PC-3 (cell line): ENCODE measurements at regions of chr2 and their contacts with region 1.

Region 1: DNA sequence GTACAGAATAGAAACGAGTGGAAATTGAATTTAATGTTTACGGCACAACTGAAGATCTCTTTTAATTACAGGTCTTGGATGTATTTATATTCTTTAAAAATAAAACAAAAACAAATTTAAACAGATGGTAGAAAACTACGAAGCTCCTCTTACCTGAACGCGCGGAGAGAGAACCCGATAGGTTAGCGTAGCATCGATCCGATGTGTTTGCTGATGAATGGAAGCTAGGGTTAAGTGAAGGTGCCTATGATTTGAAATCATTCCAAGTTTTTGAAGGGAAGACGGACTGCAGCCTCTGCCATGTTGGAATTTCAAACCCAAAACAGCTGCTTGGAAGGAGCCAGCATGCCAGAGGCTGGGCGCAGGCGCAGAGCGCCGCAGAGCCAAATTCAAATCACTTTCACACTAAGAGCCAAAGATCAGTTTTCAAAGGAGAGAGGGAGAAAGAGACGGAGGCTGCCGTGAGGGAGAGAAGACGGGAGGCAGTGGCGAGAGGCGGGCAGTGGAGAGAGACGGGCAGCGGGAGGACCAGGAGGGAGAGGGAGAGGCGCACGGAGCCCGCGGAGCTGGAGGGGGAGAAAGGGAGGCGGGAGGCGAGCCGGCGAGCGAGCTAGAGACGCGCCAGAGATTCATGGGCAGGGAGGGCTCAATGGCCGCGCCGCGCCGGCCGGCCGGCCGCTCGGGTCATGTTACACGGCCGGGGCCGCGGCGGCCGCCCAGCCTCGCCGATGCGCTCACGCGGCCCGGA is at the start of gene FIGN:
- DNase-seq: peak; percentile 76
- ATAC-seq: peak; percentile 78
- H3K4me3 ChIP-seq: peak within 1 kb of the TSS; percentile 87
- H3K27ac ChIP-seq: peak within 1 kb of the TSS; percentile 55
- H3K4me1 ChIP-seq: peaks cover 17% of the 10 kb centered on the region
- H3K27me3 ChIP-seq: no peaks in the 10 kb centered on the region
- CTCF ChIP-seq: no peak
- total RNA-seq, gene FIGN: 1.3 and 1.5 TPM in 2 replicates

Region 2: GRCh38 chr2:163302141-163302540 is 433.7 kb before region 1 on chr2:
- CTCF ChIA-PET with region 1: no interaction called
- POLR2A ChIA-PET with region 1: no interaction called
- intact Hi-C with region 1: no loop called
- DNase-seq: no peak
- ATAC-seq: no peak
- H3K4me3 ChIP-seq: no peak overlapping the region
- H3K27ac ChIP-seq: no peak overlapping the region
- H3K4me1 ChIP-seq: no peaks in the 10 kb centered on the region
- H3K27me3 ChIP-seq: peaks cover 4% of the 10 kb centered on the region; the same call in 1 of the 2 replicates
- CTCF ChIP-seq: no peak

Region 3: GRCh38 chr2:163345908-163346573 is 389.8 kb before region 1 on chr2:
- CTCF ChIA-PET with region 1: no interaction called
- POLR2A ChIA-PET with region 1: no interaction called
- intact Hi-C with region 1: loop called (anchors 5 kb)
- DNase-seq: peak; percentile 85
- ATAC-seq: 0 out of 2 replicates have a peak, but pooled peaks have one; percentile 8
- H3K4me3 ChIP-seq: no peak overlapping the region
- H3K27ac ChIP-seq: no peak overlapping the region
- H3K4me1 ChIP-seq: peaks cover 25% of the 10 kb centered on the region
- H3K27me3 ChIP-seq: no peaks in the 10 kb centered on the region
- CTCF ChIP-seq: peak; percentile 82

Region 4: GRCh38 chr2:163601377-163601776 is 134.5 kb before region 1 on chr2:
- CTCF ChIA-PET with region 1: no interaction called
- POLR2A ChIA-PET with region 1: no interaction called
- intact Hi-C with region 1: loop called (anchors 5 kb)
- DNase-seq: no peak
- ATAC-seq: no peak
- H3K4me3 ChIP-seq: no peak overlapping the region
- H3K27ac ChIP-seq: no peak overlapping the region
- H3K4me1 ChIP-seq: peaks cover 15% of the 10 kb centered on the region
- H3K27me3 ChIP-seq: no peaks in the 10 kb centered on the region
- CTCF ChIP-seq: no peak

Region 5: GRCh38 chr2:163878531-163879117 is 142.8 kb after region 1 on chr2:
- CTCF ChIA-PET with region 1: no interaction called
- POLR2A ChIA-PET with region 1: interaction called, 11 read pairs
- intact Hi-C with region 1: no loop called
- DNase-seq: peak; percentile 61
- ATAC-seq: peak; percentile 49; the same call in 1 of the 2 replicates
- H3K4me3 ChIP-seq: no peak overlapping the region
- H3K27ac ChIP-seq: no peak overlapping the region
- H3K4me1 ChIP-seq: peaks cover 7% of the 10 kb centered on the region
- H3K27me3 ChIP-seq: no peaks in the 10 kb centered on the region
- CTCF ChIP-seq: peak; percentile 84

Region 6: GRCh38 chr2:164061129-164061746 is 325.4 kb after region 1 on chr2:
- CTCF ChIA-PET with region 1: no interaction called
- POLR2A ChIA-PET with region 1: no interaction called
- intact Hi-C with region 1: loop called (anchors 10 kb)
- DNase-seq: peak; percentile 69
- ATAC-seq: peak; percentile 45
- H3K4me3 ChIP-seq: no peak overlapping the region
- H3K27ac ChIP-seq: no peak overlapping the region
- H3K4me1 ChIP-seq: no peaks in the 10 kb centered on the region
- H3K27me3 ChIP-seq: peaks cover 32% of the 10 kb centered on the region
- CTCF ChIP-seq: peak; percentile 93